ENCODE measurements at regions of chrX and their contacts with region 1.

Region 1: GRCh38 chrX:77527233-77528001 is 80.2 kb downstream of the FGF16 start:
- DNase-seq: no peak
- ATAC-seq: no peak
- H3K4me3 ChIP-seq: no peak overlapping the region
- H3K27ac ChIP-seq: no peak overlapping the region
- H3K4me1 ChIP-seq: no peaks in the 10 kb centered on the region
- H3K27me3 ChIP-seq: no peaks in the 10 kb centered on the region
- CTCF ChIP-seq: no peak
- POLR2A ChIP-seq: no peak
- RAD21 ChIP-seq: no peak

Region 2: DNA sequence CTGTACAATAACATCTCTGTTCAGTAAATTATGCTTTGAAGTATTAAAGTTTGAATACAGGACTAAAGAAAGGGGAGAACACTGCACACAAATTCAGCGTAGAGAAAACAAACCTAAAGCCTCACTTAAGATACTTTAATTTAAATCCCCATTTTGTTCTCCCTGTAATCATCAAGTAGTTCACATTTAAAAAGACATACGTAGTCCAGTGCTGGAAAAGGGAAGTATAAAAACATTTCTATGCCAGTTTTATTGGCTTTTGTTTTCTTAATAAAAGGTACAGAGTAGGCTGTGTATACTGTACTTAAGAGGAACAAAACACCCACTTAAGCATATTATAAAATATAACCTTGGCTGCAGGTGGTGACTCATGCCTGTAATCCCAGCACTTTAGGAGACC is 21.3 kb after region 1 on chrX:
- CTCF ChIA-PET with region 1: no interaction called
- POLR2A ChIA-PET with region 1: no interaction called
- dilution Hi-C with region 1: no loop called
- in situ Hi-C with region 1: no loop called
- intact Hi-C with region 1: loop called (anchors 1 kb)
- DNase-seq: no peak
- ATAC-seq: no peak
- H3K4me3 ChIP-seq: no peak overlapping the region
- H3K27ac ChIP-seq: no peak overlapping the region
- H3K4me1 ChIP-seq: no peaks in the 10 kb centered on the region
- H3K27me3 ChIP-seq: no peaks in the 10 kb centered on the region
- CTCF ChIP-seq: no peak
- POLR2A ChIP-seq: no peak
- RAD21 ChIP-seq: no peak